HEK293 (cell line): ENCODE measurements at regions of chr20 and their contacts with region 1.

Region 1: DNA sequence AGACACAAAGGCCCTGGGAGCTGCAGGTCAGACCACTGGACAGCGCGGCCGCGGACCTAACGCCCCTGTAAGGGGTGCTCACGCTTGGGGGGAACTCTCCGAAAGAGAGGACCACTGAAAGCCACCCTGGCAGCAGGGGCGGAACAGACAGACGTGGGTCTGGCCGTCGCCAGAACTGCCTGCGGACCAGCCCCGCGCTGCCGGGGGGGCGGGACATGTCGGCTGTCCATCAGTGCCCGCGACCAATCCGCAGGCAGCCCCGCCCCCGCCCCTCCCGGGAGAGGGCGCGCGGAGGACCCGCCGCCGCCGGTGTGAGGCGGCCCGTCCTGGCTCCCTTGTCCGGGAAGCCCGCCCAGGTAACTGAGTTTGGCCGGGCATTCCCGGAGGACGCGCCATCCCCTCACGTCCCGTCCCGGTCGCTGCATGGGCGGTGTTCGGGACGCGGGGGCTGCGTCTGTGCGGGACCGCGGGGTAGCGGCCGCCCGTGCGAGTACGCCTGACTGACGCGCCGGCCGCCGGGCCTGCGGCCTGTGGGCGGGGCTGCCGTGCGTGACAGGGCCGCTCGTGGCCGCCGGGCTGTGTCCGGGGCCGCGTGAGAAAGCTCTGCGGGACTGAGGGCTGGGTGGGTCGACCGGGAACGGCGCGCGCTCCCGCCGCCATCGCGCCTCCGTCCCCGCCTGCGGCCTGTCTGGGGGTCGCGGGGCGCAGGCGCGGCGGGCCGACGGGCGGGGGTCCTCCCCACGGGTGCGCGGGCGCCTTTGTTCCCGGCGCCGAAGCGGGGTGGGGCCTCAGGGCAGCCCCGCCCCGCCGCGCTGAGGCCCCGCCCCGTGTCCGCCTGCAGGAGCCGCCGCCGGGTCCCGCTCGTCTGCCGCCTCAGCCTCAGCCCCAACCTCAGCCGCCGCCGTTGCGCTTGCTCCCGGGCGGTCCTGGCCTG is at the start of gene PLCG1:
- H3K4me3 ChIP-seq: peak within 1 kb of the TSS; percentile 88
- H3K27ac ChIP-seq: peak within 1 kb of the TSS; percentile 97
- H3K4me1 ChIP-seq: no peaks in the 10 kb centered on the region
- CTCF ChIP-seq: no peak

Region 2: DNA sequence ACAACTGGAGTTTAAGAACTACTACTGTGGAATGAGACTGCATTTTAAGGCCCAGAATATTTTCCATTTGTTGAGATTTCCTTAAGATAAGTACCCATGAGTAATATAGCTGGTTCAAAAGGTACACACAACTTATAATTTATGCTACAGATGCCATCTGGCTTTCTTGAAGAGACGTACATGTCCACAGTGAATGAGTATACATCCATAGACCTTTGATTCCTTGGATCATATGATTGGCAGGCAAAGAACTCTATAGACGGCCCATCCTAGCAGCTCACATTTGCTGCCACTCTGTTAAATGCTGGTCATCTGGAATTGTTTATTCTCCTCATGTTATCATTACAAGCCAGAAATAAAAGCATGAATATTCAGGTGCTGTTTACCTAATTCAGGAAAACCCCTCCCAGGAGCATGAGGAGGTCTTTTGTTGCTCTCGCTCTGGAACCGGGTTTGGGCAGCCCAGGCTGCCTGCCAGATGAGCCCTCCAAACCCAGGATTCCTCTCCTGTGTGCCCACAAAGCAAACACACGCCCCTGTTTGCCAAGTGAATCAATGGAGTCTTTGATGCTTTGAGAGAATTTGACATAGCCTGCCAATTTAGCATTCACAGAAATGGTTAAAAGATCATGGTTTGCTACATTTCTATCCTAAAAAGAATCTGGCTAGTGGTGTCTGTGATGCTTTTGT is 17.3 kb before region 1 on chr20:
- CTCF ChIA-PET with region 1: interaction called, 14 read pairs
- POLR2A ChIA-PET with region 1: interaction called, 4 read pairs
- H3K4me3 ChIP-seq: no peak overlapping the region
- H3K27ac ChIP-seq: no peak overlapping the region
- H3K4me1 ChIP-seq: no peaks in the 10 kb centered on the region
- CTCF ChIP-seq: no peak

Region 3: GRCh38 chr20:41154436-41155176 is 17.7 kb after region 1 on chr20:
- CTCF ChIA-PET with region 1: interaction called, 14 read pairs
- POLR2A ChIA-PET with region 1: interaction called, 5 read pairs
- H3K4me3 ChIP-seq: no peak overlapping the region
- H3K27ac ChIP-seq: peak overlapping the region; percentile 24; the same call in 1 of the 2 replicates
- H3K4me1 ChIP-seq: peaks cover 5% of the 10 kb centered on the region; the same call in 1 of the 2 replicates
- CTCF ChIP-seq: no peak

Region 4: DNA sequence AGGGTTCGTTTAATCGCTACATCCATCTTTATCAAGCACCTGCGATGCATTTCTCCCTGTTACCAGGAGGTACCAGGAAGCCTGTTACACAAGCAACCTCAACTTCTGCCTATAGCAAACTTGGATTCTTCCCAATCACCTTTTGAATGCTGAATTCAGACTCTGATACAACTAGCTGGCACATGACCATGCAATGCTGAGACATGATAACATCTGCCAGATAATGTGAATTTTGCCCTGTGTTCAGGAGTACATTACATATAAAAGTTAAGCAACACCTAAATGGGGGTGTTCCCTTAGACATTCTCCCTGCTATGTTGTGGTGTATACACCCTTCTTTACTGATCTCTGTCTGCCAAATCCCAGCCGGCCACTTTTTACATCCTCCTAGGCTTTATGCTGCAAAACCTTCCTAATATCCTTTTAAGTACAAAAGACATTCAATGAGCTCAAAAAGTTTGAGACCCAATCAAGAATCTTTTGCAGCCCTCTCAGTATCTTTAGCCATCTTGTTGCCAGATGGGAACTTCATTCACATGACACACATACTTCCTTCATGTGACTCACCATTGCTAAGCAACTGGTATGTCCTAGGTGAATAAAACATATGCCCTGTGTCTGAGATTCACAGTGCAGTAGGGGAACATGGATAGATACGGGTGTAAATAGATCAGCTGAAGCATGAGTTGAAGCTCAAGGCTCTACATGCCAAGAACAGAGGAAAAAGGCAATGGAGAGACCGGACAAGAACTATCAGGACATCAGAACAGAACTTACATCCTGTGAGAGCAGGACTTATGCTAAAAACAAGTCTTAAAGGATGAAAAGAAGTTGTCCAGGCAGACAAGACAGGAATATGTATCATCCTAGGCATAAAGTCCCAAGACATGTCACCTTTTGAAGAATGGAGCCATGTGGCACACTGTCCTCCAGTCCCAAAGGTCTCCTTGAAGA is 96.3 kb after region 1 on chr20:
- CTCF ChIA-PET with region 1: interaction called, 13 read pairs
- POLR2A ChIA-PET with region 1: no interaction called
- H3K4me3 ChIP-seq: no peak overlapping the region
- H3K27ac ChIP-seq: no peak overlapping the region
- H3K4me1 ChIP-seq: no peaks in the 10 kb centered on the region
- CTCF ChIP-seq: no peak

Region 5: GRCh38 chr20:41339507-41340326 is 202.8 kb after region 1 on chr20:
- CTCF ChIA-PET with region 1: interaction called, 39 read pairs
- POLR2A ChIA-PET with region 1: interaction called, 5 read pairs
- H3K4me3 ChIP-seq: peak overlapping the region; percentile 42
- H3K27ac ChIP-seq: no peak overlapping the region
- H3K4me1 ChIP-seq: no peaks in the 10 kb centered on the region; the same call in 1 of the 2 replicates
- CTCF ChIP-seq: peak; percentile 97